HEK293 (cell line): ENCODE measurements at regions of chr9 and their contacts with region 1.

Region 1: GRCh38 chr9:35903049-35903448 is 3.0 kb upstream of the HRCT1 start:
- H3K4me3 ChIP-seq: no peak overlapping the region
- H3K27ac ChIP-seq: no peak overlapping the region
- H3K4me1 ChIP-seq: peaks cover 5% of the 10 kb centered on the region
- CTCF ChIP-seq: 0 out of 2 replicates have a peak, but pooled peaks have one; percentile 19

Region 2: GRCh38 chr9:35538361-35539234 is 364.5 kb before region 1 on chr9:
- CTCF ChIA-PET with region 1: no interaction called
- POLR2A ChIA-PET with region 1: no interaction called
- H3K4me3 ChIP-seq: no peak overlapping the region
- H3K27ac ChIP-seq: no peak overlapping the region
- H3K4me1 ChIP-seq: no peaks in the 10 kb centered on the region
- CTCF ChIP-seq: no peak

Region 3: GRCh38 chr9:35891646-35892045 is 11.4 kb before region 1 on chr9:
- CTCF ChIA-PET with region 1: interaction called, 19 read pairs
- POLR2A ChIA-PET with region 1: interaction called, 3 read pairs
- H3K4me3 ChIP-seq: no peak overlapping the region
- H3K27ac ChIP-seq: no peak overlapping the region
- H3K4me1 ChIP-seq: no peaks in the 10 kb centered on the region
- CTCF ChIP-seq: no peak